Left cardiac atrium (tissue), 4 donors: ENCODE measurements at regions of chr9 and their contacts with region 1.

Region 1: GRCh38 chr9:130707225-130707976 is 13.8 kb downstream of the EXOSC2 start:
- DNase-seq: peak; percentile 78
- ATAC-seq: peak; percentile 29 to 30

Region 2: GRCh38 chr9:130756455-130757152 is 49.2 kb after region 1 on chr9:
- intact Hi-C with region 1: no loop called
- DNase-seq: no peak
- ATAC-seq: no peak

Region 3: DNA sequence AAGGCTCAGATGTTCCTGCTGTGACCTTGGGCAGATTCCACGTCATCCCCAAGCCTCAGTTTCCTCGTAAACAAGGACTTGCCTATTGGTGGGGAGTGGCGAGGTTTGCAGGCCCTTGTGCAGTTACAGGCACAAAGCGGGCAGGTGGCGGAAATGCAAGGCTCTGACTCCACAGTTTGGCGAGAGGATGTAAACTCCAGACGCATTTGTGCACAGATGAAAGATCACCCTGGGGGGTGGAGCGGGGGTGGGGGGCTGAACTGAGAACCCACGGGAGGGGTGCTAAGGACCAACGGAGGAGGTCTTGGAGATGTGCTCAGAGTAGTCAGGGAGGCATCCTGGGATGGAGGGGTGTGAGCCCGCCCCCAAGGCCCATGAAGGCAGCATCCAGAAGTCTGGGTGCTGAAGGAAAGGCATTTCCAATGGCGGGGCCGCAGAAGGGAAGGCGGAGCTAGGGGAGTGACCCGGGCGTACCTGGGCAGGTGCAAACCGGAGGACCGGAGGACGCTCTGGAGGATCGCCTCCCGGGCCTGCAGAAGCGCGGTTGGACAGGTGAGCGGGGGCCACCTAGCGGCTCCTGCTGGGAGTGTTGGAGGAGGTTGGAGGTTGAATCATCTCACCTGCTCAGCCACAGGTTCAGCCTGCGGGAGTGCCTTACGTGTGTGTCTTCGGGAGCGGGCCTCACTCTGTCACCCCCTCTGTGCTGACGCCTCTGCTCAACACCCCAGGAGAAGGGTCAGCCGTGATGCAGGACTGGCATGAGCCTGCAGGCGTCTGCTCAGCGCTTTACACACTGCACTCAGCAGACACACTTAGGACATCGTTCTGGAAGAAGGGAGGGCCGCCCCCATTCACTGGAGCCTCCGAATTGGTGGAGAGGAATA is 233.5 kb after region 1 on chr9:
- intact Hi-C with region 1: loop called (anchors 2 to 5 kb)
- DNase-seq: peak; percentile 63
- ATAC-seq: peak; percentile 49 to 78